Calu3 (cell line): ENCODE measurements at regions of chr10 and their contacts with region 1.

Region 1: GRCh38 chr10:32445740-32446535 is at the start of gene CCDC7:
- DNase-seq: peak; percentile 84
- H3K4me3 Mint-ChIP-seq: peak within 1 kb of the TSS; percentile 71
- H3K27ac Mint-ChIP-seq: peak within 1 kb of the TSS; percentile 71
- H3K4me1 Mint-ChIP-seq: no peaks in the 10 kb centered on the region
- H3K27me3 Mint-ChIP-seq: peaks cover 18% of the 10 kb centered on the region
- CTCF ChIP-seq: peak; percentile 38
- total RNA-seq, gene CCDC7: 7.4 and 8.4 TPM in 2 replicates

Region 2: GRCh38 chr10:32155042-32155531 is 290.9 kb before region 1 on chr10:
- CTCF ChIA-PET with region 1: no interaction called
- intact Hi-C with region 1: no loop called
- DNase-seq: no peak
- H3K4me3 Mint-ChIP-seq: no peak overlapping the region
- H3K27ac Mint-ChIP-seq: peak overlapping the region; percentile 79
- H3K4me1 Mint-ChIP-seq: peaks cover 28% of the 10 kb centered on the region
- H3K27me3 Mint-ChIP-seq: no peaks in the 10 kb centered on the region
- CTCF ChIP-seq: no peak

Region 3: GRCh38 chr10:32378363-32379317 is 67.3 kb before region 1 on chr10:
- CTCF ChIA-PET with region 1: no interaction called
- intact Hi-C with region 1: loop called (anchors 5 kb)
- DNase-seq: peak; percentile 89
- H3K4me3 Mint-ChIP-seq: no peak overlapping the region
- H3K27ac Mint-ChIP-seq: no peak overlapping the region
- H3K4me1 Mint-ChIP-seq: peaks cover 15% of the 10 kb centered on the region
- H3K27me3 Mint-ChIP-seq: no peaks in the 10 kb centered on the region
- CTCF ChIP-seq: no peak